ENCODE measurements at regions of chr2 and their contacts with region 1.

Region 1: DNA sequence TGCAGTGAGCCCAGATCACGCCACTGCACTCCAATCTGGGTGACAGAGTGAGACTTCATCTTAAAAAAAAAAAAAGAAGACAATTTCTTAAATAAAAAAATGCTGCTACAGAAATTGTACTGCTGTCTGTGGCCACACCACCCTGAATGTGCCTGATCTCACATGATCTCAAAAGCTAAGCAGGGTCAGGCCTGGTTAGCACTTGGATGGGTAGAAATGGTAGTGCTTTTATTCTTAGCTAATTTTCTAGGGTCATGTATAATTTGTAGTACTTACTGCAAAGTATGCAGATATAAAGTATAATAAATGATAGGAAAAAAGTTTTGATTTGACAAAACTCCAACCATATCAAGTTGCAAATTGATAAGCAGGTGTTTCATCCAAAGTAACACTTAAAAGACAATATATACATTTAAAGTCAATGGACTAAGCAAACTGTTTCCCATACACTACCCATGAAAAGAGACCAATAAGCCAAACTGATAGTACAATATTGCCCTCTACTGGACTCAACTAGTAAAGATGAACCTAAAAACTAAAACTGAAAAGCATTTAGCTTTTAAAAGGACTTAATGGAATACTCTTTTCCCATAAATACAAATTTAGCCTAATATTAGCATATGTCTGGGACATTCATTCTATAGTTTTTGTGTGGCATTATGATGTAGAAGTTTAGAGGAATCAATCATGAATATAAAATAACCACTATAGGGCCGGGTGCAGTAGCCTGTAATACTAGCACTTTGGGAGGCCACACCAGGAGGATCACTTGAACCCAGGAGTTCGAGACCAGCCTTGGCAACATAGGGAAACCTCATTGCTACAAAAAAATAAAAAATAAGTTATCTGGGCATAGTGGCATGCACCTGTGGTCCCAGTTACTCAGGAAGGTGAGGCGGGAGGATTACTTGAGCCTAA is 18.6 kb upstream of the PEX13 start:
- DNase-seq: no peak
- ATAC-seq: no peak

Region 2: DNA sequence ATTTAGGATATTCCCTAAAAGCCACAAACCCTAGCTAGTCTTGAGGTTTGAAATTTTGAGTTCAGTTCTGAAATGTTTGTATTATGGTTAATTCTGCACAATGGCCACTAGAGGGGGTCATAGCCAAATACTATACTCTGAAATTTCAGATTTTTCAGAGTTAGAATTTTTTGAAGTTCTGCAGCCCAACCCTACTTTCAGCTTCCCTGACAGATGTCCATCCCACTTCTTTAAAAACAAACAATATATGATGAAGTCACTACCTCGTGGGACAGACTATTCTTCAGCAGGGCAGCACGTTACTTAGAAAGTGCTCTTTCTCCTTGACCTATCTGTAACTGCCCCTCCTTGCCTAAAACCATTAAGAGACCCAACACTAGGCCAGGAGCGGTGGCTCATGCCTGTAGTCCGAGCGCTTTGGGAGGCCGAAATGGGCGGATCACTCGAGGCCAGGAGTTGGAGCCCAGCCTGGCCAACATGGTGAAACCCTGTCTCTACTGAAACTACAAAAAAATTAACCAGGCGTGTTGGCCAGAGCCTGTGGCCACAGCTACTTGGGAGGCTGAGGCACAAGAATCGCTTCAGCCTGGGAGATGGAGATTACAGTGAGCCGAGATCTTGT is 291.0 kb before region 1 on chr2:
- intact Hi-C with region 1: loop called (anchors 2 kb)
- DNase-seq: no peak
- ATAC-seq: peak; percentile 16

Region 3: GRCh38 chr2:60794277-60794863 is 204.5 kb before region 1 on chr2:
- intact Hi-C with region 1: loop called (anchors 5 kb)
- DNase-seq: no peak
- ATAC-seq: no peak